Heart left ventricle (tissue), 16 donors: ENCODE measurements at regions of chr14 and their contacts with region 1.

Region 1: DNA sequence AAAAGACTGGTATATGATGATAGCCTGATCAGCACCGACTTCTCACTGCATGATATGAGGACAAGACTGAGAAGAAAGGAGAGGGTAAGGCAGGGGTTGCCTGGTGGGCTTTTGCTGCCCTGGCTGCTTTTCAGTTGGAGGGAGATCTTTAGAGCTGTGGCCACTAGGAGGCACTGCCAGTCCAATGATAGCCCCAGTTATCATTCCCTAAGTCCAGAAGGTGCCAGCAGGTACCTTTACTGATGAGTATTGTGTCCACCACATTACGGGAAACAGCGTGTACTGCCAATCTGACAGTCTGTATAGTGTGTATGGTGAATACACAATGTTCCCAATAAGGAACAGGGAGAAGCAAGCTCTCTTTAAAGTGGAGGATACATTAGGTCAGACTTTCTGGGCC is 55.8 kb upstream of the CCDC175 start:
- DNase-seq: no peak
- ATAC-seq: no peak
- H3K4me3 ChIP-seq: no peak overlapping the region
- H3K27ac ChIP-seq: no peak overlapping the region
- H3K4me1 ChIP-seq: peaks cover 0 to 8% (median 0%) of the 10 kb centered on the region in 12 donors
- H3K27me3 ChIP-seq: peaks cover 0 to 51% (median 21%) of the 10 kb centered on the region in 9 donors
- CTCF ChIP-seq: peak in 6 of 12 donors; percentile 7 to 38 (median 28)
- POLR2A ChIP-seq: no peak

Region 2: GRCh38 chr14:59560314-59560713 is 72.1 kb before region 1 on chr14:
- intact Hi-C with region 1: no loop called
- DNase-seq: no peak
- ATAC-seq: no peak
- H3K4me3 ChIP-seq: no peak overlapping the region
- H3K27ac ChIP-seq: no peak overlapping the region
- H3K4me1 ChIP-seq: no peaks in the 10 kb centered on the region
- H3K27me3 ChIP-seq: no peaks in the 10 kb centered on the region
- CTCF ChIP-seq: no peak
- POLR2A ChIP-seq: no peak

Region 3: GRCh38 chr14:59844413-59844812 is 212.0 kb after region 1 on chr14:
- intact Hi-C with region 1: no loop called
- DNase-seq: no peak
- ATAC-seq: no peak
- H3K4me3 ChIP-seq: no peak overlapping the region
- H3K27ac ChIP-seq: no peak overlapping the region
- H3K4me1 ChIP-seq: peaks cover 0 to 11% (median 0%) of the 10 kb centered on the region in 12 donors
- H3K27me3 ChIP-seq: no peaks in the 10 kb centered on the region
- CTCF ChIP-seq: no peak
- POLR2A ChIP-seq: no peak

Region 4: GRCh38 chr14:59897761-59898383 is 265.5 kb after region 1 on chr14:
- intact Hi-C with region 1: loop called in 1 of 10 experiments (anchors 10 kb)
- DNase-seq: peak in 1 of 5 donors; percentile 6
- ATAC-seq: peak in 1 of 4 donors; percentile 33
- H3K4me3 ChIP-seq: no peak overlapping the region
- H3K27ac ChIP-seq: no peak overlapping the region
- H3K4me1 ChIP-seq: no peaks in the 10 kb centered on the region
- H3K27me3 ChIP-seq: peaks cover 0 to 9% (median 0%) of the 10 kb centered on the region in 9 donors
- CTCF ChIP-seq: peak in 7 of 12 donors; percentile 14 to 41 (median 35)
- POLR2A ChIP-seq: no peak

Region 5: DNA sequence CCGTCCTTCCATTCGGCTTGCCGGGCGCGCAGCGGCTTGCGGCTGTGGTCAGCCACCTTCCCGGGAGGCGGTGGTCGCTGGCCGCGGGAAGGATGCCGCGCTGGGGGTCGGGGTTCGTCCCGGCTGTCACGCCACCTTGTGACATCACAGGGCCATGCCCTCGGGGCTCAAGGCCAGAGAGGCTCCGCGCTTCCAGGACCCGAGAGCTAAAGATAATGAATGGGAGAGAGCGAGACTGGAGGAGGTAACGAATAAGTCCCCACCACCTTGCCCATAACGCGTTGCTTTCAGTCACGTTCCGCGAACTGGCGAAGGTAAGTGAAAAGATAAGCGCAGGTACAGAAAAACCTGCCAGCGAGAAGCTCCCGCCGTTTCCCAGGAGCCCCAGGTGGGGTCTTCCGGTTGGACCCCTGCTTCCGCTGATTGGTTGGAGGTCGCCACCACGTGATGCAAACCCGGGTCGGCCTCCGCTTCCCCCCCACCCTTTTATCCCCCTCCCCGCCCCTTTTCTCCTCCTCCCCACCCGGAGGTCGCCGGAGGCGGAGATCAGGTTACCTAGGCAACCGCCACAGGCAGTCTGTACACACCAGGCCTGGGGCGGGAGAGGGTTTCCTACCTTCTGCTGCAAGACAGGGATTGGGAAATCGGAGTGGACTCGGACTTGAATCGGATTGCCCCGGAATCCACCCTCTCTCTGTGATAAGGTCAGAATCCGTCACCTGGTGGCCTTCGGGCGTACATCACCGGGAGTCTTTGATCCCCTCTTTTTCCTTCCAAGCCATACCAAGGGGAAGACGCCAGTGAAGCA is 287.4 kb after region 1 on chr14 and contains the start of gene LRRC9:
- intact Hi-C with region 1: loop called in 1 of 10 experiments (anchors 5 kb)
- DNase-seq: peak in 3 of 5 donors; percentile 23 to 51 (median 26)
- ATAC-seq: peak in 1 of 4 donors; percentile 51
- H3K4me3 ChIP-seq: peak within 1 kb of the TSS in 11 of 12 donors; percentile 20 to 57 (median 49)
- H3K27ac ChIP-seq: no peak within 1 kb of the TSS
- H3K4me1 ChIP-seq: peaks cover 0 to 14% (median 8%) of the 10 kb centered on the region in 12 donors
- H3K27me3 ChIP-seq: peaks cover 0 to 52% (median 8%) of the 10 kb centered on the region in 9 donors
- CTCF ChIP-seq: no peak
- POLR2A ChIP-seq: no peak
- total RNA-seq, gene LRRC9: 0.36 to 0.66 (median 0.60) TPM in 3 of 9 donors, not detected in the others

Region 6: DNA sequence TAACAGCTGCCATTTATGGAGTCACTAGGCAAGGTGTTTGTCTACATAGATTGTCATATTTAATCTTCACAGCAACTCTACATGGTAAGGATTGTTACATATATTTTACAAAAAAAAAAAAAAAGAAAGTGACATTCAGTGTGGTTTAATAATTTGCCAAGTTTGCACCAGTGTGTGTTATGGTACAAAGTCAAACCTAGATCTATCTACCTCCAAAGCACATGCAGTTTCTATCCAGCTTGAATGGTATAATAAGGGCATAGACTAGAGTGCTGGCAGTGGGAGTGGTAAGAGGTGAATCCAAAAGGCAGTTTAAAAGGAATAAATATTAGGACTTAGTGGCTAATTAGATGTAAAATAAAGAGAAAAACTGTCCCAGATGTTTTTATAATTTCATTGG is 393.2 kb after region 1 on chr14:
- intact Hi-C with region 1: no loop called
- DNase-seq: no peak
- ATAC-seq: no peak
- H3K4me3 ChIP-seq: no peak overlapping the region
- H3K27ac ChIP-seq: no peak overlapping the region
- H3K4me1 ChIP-seq: no peaks in the 10 kb centered on the region
- H3K27me3 ChIP-seq: no peaks in the 10 kb centered on the region
- CTCF ChIP-seq: no peak
- POLR2A ChIP-seq: no peak